Caco-2 (cell line): ENCODE measurements at regions of chr3 and their contacts with region 1.

Region 1: DNA sequence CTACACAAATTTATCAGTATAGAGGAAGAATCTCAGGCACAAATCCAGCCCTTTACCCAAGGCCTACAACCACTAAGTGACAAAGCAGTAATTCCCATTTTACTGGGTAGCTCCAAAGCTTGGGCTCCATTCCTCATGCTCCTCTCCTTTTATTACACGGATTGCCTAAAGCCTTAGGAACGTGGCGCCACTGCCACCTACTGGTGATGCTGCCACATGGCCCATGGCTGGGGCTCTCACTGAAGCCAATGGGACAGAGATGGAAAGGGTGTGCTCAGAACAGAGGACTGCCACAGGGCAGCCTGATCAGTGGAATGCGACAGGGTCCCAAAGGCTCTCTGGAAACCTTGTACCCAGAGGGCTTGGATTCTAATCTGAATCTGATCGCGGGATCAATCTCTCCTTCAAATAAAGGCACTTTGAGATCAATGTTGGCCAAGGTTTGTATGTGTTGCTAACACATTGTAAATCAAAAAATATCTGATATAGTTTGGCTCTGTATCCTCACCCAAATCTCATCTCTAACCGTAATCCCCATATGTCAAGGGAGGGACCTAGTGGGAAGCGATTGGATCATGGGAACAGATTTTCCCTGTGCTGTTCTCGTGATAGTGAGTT is 33.5 kb upstream of the LYZL4 start:
- DNase-seq: peak; percentile 81 to 89
- H3K4me3 ChIP-seq: no peak overlapping the region
- H3K4me3 Mint-ChIP-seq: no peak overlapping the region
- H3K27ac Mint-ChIP-seq: no peak overlapping the region
- H3K4me1 ChIP-seq: no peaks in the 10 kb centered on the region
- H3K4me1 Mint-ChIP-seq: no peaks in the 10 kb centered on the region
- H3K27me3 ChIP-seq: no peaks in the 10 kb centered on the region
- H3K27me3 Mint-ChIP-seq: peaks cover 5% of the 10 kb centered on the region
- CTCF ChIP-seq: peak; percentile 92 to 93

Region 2: DNA sequence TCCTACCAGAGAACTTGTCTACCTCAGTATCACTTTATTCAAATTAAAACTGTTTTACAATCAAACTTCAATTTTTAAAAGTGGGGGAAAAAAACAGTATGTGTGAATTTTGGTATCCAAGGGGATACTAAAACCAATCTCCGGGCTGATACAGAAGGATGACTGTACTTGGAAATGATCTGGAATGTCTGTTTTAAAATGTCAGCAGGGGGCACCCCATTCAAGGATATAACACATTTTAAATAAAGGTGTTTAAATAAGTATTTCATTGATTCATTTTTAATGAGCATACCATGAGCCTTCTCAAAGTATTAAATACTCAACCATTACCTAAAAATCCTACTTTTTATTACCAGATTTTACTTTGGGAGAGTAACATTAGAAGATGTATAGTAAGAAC is 550.0 kb before region 1 on chr3:
- CTCF ChIA-PET with region 1: no interaction called
- POLR2A ChIA-PET with region 1: no interaction called
- intact Hi-C with region 1: loop called (anchors 10 kb)
- DNase-seq: peak in 1 of 2 experiments; percentile 44
- H3K4me3 ChIP-seq: no peak overlapping the region
- H3K4me3 Mint-ChIP-seq: no peak overlapping the region
- H3K27ac Mint-ChIP-seq: no peak overlapping the region
- H3K4me1 ChIP-seq: no peaks in the 10 kb centered on the region
- H3K4me1 Mint-ChIP-seq: no peaks in the 10 kb centered on the region
- H3K27me3 ChIP-seq: no peaks in the 10 kb centered on the region
- H3K27me3 Mint-ChIP-seq: no peaks in the 10 kb centered on the region
- CTCF ChIP-seq: peak in 1 of 2 experiments; percentile 34

Region 3: GRCh38 chr3:42229942-42230688 is 213.8 kb before region 1 on chr3:
- CTCF ChIA-PET with region 1: interaction called, 25 read pairs
- POLR2A ChIA-PET with region 1: no interaction called
- intact Hi-C with region 1: loop called (anchors 1 kb)
- DNase-seq: peak in 1 of 2 experiments; percentile 48
- H3K4me3 ChIP-seq: no peak overlapping the region
- H3K4me3 Mint-ChIP-seq: no peak overlapping the region
- H3K27ac Mint-ChIP-seq: no peak overlapping the region
- H3K4me1 ChIP-seq: peaks cover 4% of the 10 kb centered on the region; the same call in 1 of the 2 replicates
- H3K4me1 Mint-ChIP-seq: no peaks in the 10 kb centered on the region
- H3K27me3 ChIP-seq: no peaks in the 10 kb centered on the region
- H3K27me3 Mint-ChIP-seq: peaks cover 12% of the 10 kb centered on the region
- CTCF ChIP-seq: peak; percentile 55 to 61

Region 4: DNA sequence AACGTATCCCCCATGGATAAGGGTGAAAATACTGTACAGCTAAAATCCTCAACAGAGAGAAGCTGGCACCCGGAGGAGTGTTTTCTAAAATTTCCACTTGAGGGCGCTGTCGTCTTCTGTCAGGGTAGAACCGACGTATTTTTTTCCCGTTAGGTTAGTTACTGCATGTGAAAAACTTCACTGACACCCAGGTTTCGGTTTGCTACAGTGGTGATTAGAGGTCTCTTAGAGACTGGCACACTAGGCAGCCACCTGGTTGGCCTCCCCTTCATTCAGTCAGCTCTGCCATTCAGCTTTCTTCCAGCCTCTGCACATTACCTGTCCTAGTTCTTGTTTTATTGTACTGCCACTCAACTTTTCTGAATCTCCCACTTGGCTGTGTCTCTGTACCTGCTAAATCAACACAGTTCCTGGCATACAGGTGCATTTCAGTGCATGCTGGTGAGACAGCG is 196.3 kb before region 1 on chr3:
- CTCF ChIA-PET with region 1: interaction called, 35 read pairs
- POLR2A ChIA-PET with region 1: interaction called, 3 read pairs
- intact Hi-C with region 1: loop called (anchors 1 kb)
- DNase-seq: peak in 1 of 2 experiments; percentile 66
- H3K4me3 ChIP-seq: no peak overlapping the region
- H3K4me3 Mint-ChIP-seq: no peak overlapping the region
- H3K27ac Mint-ChIP-seq: no peak overlapping the region
- H3K4me1 ChIP-seq: no peaks in the 10 kb centered on the region
- H3K4me1 Mint-ChIP-seq: no peaks in the 10 kb centered on the region
- H3K27me3 ChIP-seq: no peaks in the 10 kb centered on the region; the same call in none of the 2 replicates
- H3K27me3 Mint-ChIP-seq: peaks cover 8% of the 10 kb centered on the region
- CTCF ChIP-seq: peak; percentile 72 to 76